K562 (cell line): ENCODE measurements at regions of chr2 and their contacts with region 1.

Region 1: GRCh38 chr2:95799892-95800291 is 191.7 kb downstream of the ANKRD36C start:
- DNase-seq: no peak
- ATAC-seq: no peak; the same call in 2 of the 3 replicates
- H3K4me3 ChIP-seq: no peak overlapping the region
- H3K27ac ChIP-seq: no peak overlapping the region
- H3K4me1 ChIP-seq: no peaks in the 10 kb centered on the region
- H3K27me3 ChIP-seq: no peaks in the 10 kb centered on the region
- CTCF ChIP-seq: no peak
- EP300 ChIP-seq: no peak
- POLR2A ChIP-seq: no peak
- RAD21 ChIP-seq: no peak

Region 2: DNA sequence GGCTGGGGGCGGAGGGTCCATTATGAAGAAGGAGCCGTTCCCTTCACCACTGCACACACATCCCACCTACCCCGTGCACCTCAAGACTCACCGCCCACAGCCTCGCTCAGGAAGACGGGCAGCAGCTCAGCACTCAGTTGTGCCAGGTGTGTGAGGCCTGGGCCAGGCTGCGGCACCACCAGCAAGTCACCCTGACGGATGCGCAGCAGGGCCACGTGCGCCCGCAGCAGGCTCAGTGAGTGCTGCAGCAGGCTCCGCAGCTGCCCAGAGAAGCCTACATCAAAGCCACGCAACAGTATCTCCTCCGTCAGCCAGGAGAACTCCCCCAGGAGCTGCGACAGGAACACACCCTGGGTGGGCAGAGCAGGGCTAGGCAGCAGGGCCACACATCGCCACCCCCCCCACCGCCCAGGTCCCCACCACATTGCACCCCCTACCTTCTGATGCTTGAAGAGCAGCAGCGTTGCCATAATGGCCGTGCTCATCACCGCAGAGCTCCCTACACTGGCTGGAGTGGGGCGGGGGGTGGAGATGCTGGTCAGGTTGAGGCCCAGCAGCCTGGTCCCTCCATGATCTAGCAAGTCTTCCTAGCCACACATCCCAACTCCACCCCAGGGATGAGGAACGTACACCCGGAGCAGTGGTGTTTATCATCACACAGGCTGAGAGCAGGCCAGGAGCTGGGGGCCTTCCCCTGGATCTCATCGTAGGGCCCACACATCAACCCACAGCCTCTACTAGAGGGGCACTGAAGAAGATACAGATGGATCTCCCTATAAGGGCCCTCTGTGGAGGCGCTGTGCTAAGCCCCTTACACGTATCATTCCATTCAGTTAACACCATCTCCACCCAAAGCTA is 224.7 kb after region 1 on chr2:
- CTCF ChIA-PET with region 1: no interaction called
- POLR2A ChIA-PET with region 1: no interaction called
- in situ Hi-C with region 1: loop called (anchors 25 kb)
- intact Hi-C with region 1: no loop called
- DNase-seq: peak in 2 of 4 experiments; percentile 8
- ATAC-seq: 0 out of 3 replicates have a peak, but pooled peaks have one; percentile 9
- H3K4me3 ChIP-seq: no peak overlapping the region
- H3K27ac ChIP-seq: no peak overlapping the region
- H3K4me1 ChIP-seq: peaks cover 0 to 13% of the 10 kb centered on the region in 2 experiments; a peak in 2 of 5 replicates
- H3K27me3 ChIP-seq: no peaks in the 10 kb centered on the region; a peak in 1 of 5 replicates
- CTCF ChIP-seq: no peak
- EP300 ChIP-seq: no peak
- POLR2A ChIP-seq: no peak
- RAD21 ChIP-seq: no peak

Region 3: GRCh38 chr2:96091533-96092334 is 291.8 kb after region 1 on chr2:
- CTCF ChIA-PET with region 1: no interaction called
- POLR2A ChIA-PET with region 1: no interaction called
- in situ Hi-C with region 1: loop called (anchors 25 kb)
- intact Hi-C with region 1: no loop called
- DNase-seq: peak in 2 of 4 experiments; percentile 38 to 47
- ATAC-seq: peak; percentile 54
- H3K4me3 ChIP-seq: no peak overlapping the region
- H3K27ac ChIP-seq: no peak overlapping the region
- H3K4me1 ChIP-seq: peaks cover 11 to 32% of the 10 kb centered on the region in 2 experiments; a peak in 4 of 5 replicates
- H3K27me3 ChIP-seq: peaks cover 3 to 13% of the 10 kb centered on the region in 2 experiments; a peak in 1 of 5 replicates
- CTCF ChIP-seq: no peak
- EP300 ChIP-seq: no peak
- POLR2A ChIP-seq: no peak
- RAD21 ChIP-seq: no peak